ENCODE measurements at regions of chr7 and their contacts with region 1.

Region 1: GRCh38 chr7:128387216-128388144 is 22.3 kb downstream of the IMPDH1 start:
- DNase-seq: peak; percentile 62 to 93 (median 85)

Region 2: DNA sequence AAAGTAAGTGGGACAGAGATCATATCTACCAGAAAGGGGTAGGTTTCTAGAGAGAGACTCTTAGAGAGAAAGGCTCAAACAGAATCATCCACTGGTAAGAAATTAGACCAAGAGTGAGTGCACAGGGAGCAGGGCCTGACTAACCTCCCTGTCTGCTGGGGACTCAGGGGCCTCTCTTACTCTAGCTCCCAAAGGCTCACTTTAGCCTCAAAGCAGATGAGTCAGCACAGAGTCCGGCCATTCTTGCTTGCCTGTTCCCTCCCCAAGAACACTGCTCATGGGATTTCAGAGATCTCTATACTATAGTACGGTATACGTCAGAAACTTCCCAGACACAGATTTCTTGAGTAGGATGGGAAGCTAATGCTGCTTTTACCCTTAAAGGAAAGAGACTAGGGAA is 76.5 kb before region 1 on chr7:
- intact Hi-C with region 1: no loop called
- DNase-seq: no peak

Region 3: DNA sequence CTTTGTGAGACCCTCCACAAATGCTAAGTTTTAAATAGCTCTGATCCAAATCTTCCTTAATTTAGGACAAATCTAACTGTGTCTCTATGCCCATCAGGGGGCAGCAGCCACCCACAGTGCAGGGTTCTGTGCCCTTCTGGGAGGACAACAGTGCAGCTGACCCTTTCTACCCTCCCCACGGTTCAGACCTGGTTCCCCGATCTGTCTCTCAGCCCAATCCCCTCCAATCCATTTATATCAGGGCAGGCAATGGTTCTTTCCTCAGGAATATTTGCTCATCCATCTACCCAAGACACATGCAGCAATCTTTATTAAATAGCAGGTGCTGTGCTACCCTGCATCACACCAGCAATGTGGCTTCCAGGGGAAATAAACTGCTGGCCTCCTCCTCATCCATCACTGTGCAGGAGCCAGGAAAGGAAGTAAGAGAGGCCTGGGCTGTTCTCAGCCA is 39.8 kb before region 1 on chr7:
- intact Hi-C with region 1: loop called (anchors 2 kb)
- DNase-seq: peak in 41 of 42 donors; percentile 40 to 85 (median 66)

Measured in head of caudate nucleus (tissue), 42 donors.